ENCODE measurements at regions of chr1 and their contacts with region 1.

Region 1: GRCh38 chr1:170032531-170033280 is 41.8 kb downstream of the KIFAP3 start:
- DNase-seq: no peak
- ATAC-seq: no peak
- H3K4me3 ChIP-seq: no peak overlapping the region
- H3K4me3 Mint-ChIP-seq: no peak overlapping the region
- H3K27ac ChIP-seq: no peak overlapping the region
- H3K27ac Mint-ChIP-seq: no peak overlapping the region
- H3K4me1 ChIP-seq: no peaks in the 10 kb centered on the region
- H3K4me1 Mint-ChIP-seq: no peaks in the 10 kb centered on the region
- H3K27me3 ChIP-seq: no peaks in the 10 kb centered on the region
- H3K27me3 Mint-ChIP-seq: no peaks in the 10 kb centered on the region
- CTCF ChIP-seq: no peak

Region 2: DNA sequence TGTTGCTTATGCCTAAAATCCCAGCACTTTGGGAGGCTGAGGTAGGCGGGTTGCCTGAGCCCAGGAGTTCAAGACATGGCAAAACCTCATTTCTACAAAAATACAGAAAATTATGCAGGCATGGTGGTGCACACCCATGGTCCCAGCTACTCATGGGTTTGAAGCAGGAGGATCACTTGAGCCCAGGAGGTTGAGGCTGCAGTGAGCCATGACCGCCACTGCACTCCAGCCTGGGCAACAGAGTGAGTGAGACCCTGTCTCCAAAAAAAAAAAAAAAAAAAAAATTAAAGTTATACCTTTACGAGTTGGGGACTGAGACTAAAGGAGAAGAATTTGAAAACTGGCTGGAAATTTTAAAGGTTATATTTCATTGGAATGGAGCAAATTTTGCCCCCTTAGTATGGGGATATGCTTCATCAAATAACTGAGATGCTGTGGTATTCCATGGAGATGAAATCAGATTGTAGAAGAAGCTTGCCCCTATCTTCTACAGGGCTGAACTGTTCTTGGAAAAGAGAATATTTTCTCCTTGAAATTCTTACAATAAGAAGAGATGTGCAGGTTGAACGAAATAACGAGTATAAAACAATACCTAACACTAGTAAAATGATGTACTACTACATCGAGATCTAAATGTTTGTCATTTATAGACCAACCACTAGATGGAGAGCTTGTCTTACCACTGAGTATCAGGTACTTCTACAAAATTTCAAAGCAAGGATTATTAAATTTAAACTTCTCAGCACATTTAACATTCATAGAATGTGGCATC is 104.1 kb before region 1 on chr1:
- CTCF ChIA-PET with region 1: no interaction called
- POLR2A ChIA-PET with region 1: no interaction called
- intact Hi-C with region 1: no loop called
- DNase-seq: peak in 3 of 14 experiments; percentile 65 to 66 (median 66)
- ATAC-seq: peak; percentile 80
- H3K4me3 ChIP-seq: no peak overlapping the region
- H3K4me3 Mint-ChIP-seq: no peak overlapping the region
- H3K27ac ChIP-seq: no peak overlapping the region
- H3K27ac Mint-ChIP-seq: no peak overlapping the region
- H3K4me1 ChIP-seq: no peaks in the 10 kb centered on the region
- H3K4me1 Mint-ChIP-seq: peaks cover 10% of the 10 kb centered on the region
- H3K27me3 ChIP-seq: no peaks in the 10 kb centered on the region
- H3K27me3 Mint-ChIP-seq: no peaks in the 10 kb centered on the region
- CTCF ChIP-seq: peak; percentile 86

Region 3: GRCh38 chr1:169985757-169986156 is 46.9 kb before region 1 on chr1:
- CTCF ChIA-PET with region 1: no interaction called
- POLR2A ChIA-PET with region 1: no interaction called
- intact Hi-C with region 1: no loop called
- DNase-seq: no peak
- ATAC-seq: no peak
- H3K4me3 ChIP-seq: no peak overlapping the region
- H3K4me3 Mint-ChIP-seq: no peak overlapping the region
- H3K27ac ChIP-seq: no peak overlapping the region
- H3K27ac Mint-ChIP-seq: no peak overlapping the region
- H3K4me1 ChIP-seq: no peaks in the 10 kb centered on the region
- H3K4me1 Mint-ChIP-seq: no peaks in the 10 kb centered on the region
- H3K27me3 ChIP-seq: no peaks in the 10 kb centered on the region
- H3K27me3 Mint-ChIP-seq: no peaks in the 10 kb centered on the region
- CTCF ChIP-seq: no peak

Region 4: DNA sequence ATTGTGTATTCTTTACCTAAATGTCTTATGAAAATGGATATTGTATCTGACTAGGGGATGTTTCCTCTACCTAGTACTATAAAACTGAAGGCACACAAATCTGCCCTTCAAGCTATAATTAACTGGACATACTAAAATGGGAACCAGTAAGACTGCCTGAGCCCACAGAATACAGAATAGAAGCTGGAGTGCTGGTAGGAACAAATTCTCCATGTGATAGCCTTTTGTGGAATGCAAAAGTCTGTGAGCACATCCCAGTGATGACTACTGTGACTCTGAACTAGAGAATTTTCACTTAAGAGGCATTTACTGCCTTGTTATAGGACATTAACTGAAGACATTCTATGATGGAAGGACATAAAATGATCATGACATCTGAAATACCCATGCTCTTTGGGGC is 11.5 kb after region 1 on chr1:
- CTCF ChIA-PET with region 1: no interaction called
- POLR2A ChIA-PET with region 1: no interaction called
- intact Hi-C with region 1: loop called in 1 of 2 experiments (anchors 1 kb)
- DNase-seq: no peak
- ATAC-seq: no peak
- H3K4me3 ChIP-seq: no peak overlapping the region
- H3K4me3 Mint-ChIP-seq: no peak overlapping the region
- H3K27ac ChIP-seq: no peak overlapping the region
- H3K27ac Mint-ChIP-seq: no peak overlapping the region
- H3K4me1 ChIP-seq: no peaks in the 10 kb centered on the region
- H3K4me1 Mint-ChIP-seq: no peaks in the 10 kb centered on the region
- H3K27me3 ChIP-seq: no peaks in the 10 kb centered on the region
- H3K27me3 Mint-ChIP-seq: no peaks in the 10 kb centered on the region
- CTCF ChIP-seq: no peak